ENCODE measurements at regions of chr1 and their contacts with region 1.

Region 1: GRCh38 chr1:93814059-93814794 is 64.8 kb downstream of the DNTTIP2 start:
- H3K4me3 ChIP-seq: no peak overlapping the region
- H3K27ac ChIP-seq: no peak overlapping the region
- H3K4me1 ChIP-seq: no peaks in the 10 kb centered on the region
- CTCF ChIP-seq: peak; percentile 95

Region 2: DNA sequence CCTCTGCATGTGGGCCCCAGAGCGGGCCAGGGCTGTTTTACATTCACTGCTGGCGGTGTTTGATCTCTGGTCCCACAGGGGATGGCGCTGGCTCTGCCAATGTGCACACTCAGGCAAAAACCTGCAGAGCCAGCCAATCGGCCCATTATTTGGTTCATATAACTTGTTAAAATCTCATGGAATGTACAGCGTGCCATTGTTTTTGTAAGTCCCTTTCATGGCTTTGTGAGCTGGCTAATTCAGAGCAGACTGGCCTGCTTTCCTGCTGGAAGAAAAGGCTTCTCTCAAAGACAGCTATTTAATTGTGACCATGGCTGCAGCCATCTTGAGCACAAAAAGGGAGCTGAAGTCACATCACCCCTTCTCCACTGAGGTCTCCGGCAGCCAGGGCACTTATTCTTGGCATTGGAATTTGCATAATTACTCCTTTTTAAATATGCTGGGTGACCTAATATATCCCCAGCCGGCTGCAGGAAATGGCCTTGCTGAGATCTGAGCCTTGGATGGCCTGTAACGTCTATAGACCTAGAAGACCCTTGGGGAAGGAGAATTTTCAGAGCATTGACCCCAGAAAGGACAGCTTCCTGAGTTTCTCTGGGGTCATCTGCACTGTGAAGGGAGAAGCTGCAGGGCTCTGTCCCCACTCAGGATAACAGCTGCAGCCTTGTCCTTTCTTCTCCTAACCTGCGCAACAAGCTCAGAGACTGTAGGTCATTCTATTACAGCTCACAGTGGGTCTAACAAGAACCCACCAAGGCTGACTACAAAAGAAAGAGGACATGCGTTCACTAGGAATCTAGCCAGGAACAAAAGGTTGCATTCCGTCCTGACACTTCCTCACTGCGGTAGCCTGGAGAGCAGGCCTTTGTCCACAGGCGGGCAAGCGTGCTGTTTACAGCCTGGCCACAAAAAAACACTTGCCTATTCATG is 178.3 kb before region 1 on chr1:
- CTCF ChIA-PET with region 1: interaction called, 309 read pairs
- POLR2A ChIA-PET with region 1: interaction called, 12 read pairs
- H3K4me3 ChIP-seq: no peak overlapping the region
- H3K27ac ChIP-seq: no peak overlapping the region
- H3K4me1 ChIP-seq: no peaks in the 10 kb centered on the region
- CTCF ChIP-seq: no peak

Region 3: DNA sequence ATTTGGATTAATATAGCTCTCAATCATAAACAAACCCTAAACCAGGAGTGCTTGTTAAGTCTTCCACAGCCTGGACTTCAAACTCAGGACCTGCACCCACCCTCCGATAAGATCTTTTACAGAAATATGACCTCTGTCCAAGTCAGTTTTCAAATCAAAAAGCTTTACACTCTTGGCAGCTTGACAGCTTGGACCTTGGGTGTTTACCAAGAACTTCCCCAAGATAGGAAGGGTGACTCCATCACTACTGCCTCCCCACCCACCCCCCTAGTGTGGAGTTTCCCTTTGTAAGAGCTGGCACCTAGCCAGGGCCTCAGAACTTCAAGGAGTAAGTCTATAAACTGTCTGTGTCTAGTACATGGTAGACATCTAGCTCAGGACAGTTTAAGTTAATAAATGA is 142.2 kb before region 1 on chr1:
- CTCF ChIA-PET with region 1: interaction called, 15 read pairs
- POLR2A ChIA-PET with region 1: no interaction called
- H3K4me3 ChIP-seq: no peak overlapping the region
- H3K27ac ChIP-seq: no peak overlapping the region
- H3K4me1 ChIP-seq: peaks cover 13% of the 10 kb centered on the region
- CTCF ChIP-seq: no peak

Region 4: DNA sequence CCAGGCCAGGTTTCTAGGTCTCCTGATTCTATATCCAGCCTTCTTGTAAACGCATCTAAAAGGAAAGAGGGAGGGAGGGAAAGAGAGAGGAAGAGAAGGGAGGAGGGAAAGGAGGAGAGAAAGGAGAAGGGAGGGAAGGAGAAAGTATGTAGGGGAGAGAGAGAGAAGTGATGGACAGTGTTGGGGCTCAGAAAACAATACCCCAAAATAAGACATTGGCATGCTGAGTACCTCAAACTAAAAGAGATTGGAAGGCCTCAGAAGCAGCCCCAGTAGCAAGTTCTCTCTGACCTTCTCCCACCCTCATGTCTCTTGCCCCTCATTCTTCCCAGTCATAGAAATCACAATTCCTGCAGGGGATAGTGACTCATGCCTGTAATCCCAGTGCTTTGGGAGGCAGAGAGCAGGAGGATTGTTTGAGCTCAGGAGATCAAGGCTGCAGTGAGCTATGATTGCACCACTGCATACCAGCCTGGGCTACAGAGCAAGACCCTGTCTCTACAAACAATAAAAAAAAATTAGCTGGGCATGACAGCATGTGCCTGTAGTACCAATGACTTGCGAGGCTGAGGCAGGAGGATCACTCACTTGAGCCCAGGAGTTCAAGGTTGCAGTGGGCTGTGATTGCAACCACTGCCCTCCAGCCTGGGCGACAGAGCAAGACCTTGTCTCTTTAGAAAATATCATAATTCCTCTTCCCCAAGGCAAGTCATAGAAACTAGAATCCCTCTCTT is 13.6 kb after region 1 on chr1:
- CTCF ChIA-PET with region 1: interaction called, 26 read pairs
- POLR2A ChIA-PET with region 1: no interaction called
- H3K4me3 ChIP-seq: no peak overlapping the region
- H3K27ac ChIP-seq: no peak overlapping the region
- H3K4me1 ChIP-seq: no peaks in the 10 kb centered on the region
- CTCF ChIP-seq: no peak

Measured in HEK293 (cell line).